Activated B cell treated with CpG ODN at 0.5 μM for 24 hours (primary cell): ENCODE measurements at regions of chr1 and their contacts with region 1.

Region 1: GRCh38 chr1:165630629-165631341 is at the start of gene MGST3:
- DNase-seq: peak; percentile 84
- ATAC-seq: peak; percentile 93
- H3K4me3 Mint-ChIP-seq: no peak within 1 kb of the TSS
- H3K27ac Mint-ChIP-seq: no peak within 1 kb of the TSS
- H3K4me1 Mint-ChIP-seq: peaks cover 33% of the 10 kb centered on the region
- H3K27me3 Mint-ChIP-seq: no peaks in the 10 kb centered on the region
- CTCF ChIP-seq: no peak
- total RNA-seq, gene MGST3: 31.3 and 33.4 TPM in 2 replicates

Region 2: DNA sequence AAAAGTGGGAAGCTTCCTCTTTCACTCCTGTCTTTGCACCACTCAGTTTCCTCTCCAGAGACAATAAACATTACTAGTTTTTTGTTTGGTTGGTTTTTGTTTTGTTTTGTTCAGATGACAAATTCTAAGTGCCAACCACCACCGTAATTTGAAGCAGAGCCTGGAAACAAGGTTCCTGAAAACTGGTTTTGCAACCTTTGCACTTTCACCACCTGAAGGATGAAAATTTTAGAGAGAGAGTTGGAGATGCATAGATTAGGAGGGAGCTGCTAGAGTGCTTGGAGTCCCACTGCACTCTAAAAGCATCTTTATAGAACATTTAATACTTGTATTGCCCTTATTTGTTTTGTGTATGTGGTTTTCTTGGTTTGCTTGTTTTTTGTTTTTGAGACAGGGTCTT is 19.9 kb before region 1 on chr1:
- CTCF ChIA-PET with region 1: no interaction called
- POLR2A ChIA-PET with region 1: no interaction called
- intact Hi-C with region 1: no loop called
- DNase-seq: no peak
- ATAC-seq: no peak
- H3K4me3 Mint-ChIP-seq: no peak overlapping the region
- H3K27ac Mint-ChIP-seq: no peak overlapping the region
- H3K4me1 Mint-ChIP-seq: peaks cover 7% of the 10 kb centered on the region
- H3K27me3 Mint-ChIP-seq: peaks cover 29% of the 10 kb centered on the region
- CTCF ChIP-seq: no peak

Region 3: DNA sequence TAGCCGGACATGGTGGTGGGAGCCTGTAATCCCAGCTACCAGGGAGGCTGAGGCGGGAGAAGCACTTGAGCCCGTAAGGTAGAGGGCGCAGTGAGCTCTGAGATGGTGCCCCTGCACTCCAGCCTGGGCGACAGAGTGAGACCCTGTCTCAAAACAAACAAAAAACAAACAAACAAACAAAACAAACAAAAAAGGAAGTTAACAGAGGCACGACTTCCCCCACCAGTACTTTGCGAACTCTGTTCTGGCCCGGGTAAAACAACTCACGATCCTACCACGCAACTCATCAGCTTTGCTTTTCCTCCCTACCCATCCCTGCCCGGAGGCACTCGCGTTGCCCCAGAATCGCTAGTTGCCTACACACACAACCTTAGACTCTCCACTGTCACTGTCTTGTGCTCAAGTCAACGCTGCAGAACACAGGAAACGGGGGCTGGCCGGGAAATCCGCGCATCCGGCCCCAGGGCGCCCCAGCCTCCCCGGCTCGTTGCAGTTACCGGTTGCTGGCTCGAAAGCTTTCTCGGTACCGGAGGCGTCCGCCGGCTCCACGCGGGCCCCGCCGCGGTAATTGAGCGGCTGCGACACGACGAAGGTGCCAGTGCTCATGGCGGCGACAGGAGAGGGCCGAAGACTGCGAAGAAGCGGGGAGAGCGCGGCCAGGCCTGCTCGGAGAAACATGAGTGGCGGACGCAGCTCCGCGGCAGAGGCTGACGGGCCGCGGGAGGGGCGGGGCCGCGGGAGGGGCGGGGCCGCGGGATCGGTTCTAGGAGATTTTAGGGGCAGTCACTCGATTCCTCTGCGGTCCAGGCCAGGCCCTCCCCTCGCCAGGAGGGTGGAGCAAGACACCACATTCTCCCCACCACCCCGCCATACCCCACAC is 67.3 kb after region 1 on chr1 and contains the start of gene ALDH9A1:
- CTCF ChIA-PET with region 1: no interaction called
- POLR2A ChIA-PET with region 1: interaction called, 3 read pairs
- intact Hi-C with region 1: loop called (anchors 1 kb)
- DNase-seq: peak; percentile 86
- ATAC-seq: peak; percentile 93
- H3K4me3 Mint-ChIP-seq: peak within 1 kb of the TSS; percentile 91
- H3K27ac Mint-ChIP-seq: peak within 1 kb of the TSS; percentile 91
- H3K4me1 Mint-ChIP-seq: peaks cover 27% of the 10 kb centered on the region
- H3K27me3 Mint-ChIP-seq: peaks cover 4% of the 10 kb centered on the region
- CTCF ChIP-seq: no peak
- total RNA-seq, gene ALDH9A1: 30.3 and 35.8 TPM in 2 replicates

Region 4: GRCh38 chr1:165759095-165759494 is 128.3 kb after region 1 on chr1:
- CTCF ChIA-PET with region 1: no interaction called
- POLR2A ChIA-PET with region 1: no interaction called
- intact Hi-C with region 1: no loop called
- DNase-seq: no peak
- ATAC-seq: no peak
- H3K4me3 Mint-ChIP-seq: no peak overlapping the region
- H3K27ac Mint-ChIP-seq: no peak overlapping the region
- H3K4me1 Mint-ChIP-seq: peaks cover 7% of the 10 kb centered on the region
- H3K27me3 Mint-ChIP-seq: no peaks in the 10 kb centered on the region
- CTCF ChIP-seq: no peak

Region 5: DNA sequence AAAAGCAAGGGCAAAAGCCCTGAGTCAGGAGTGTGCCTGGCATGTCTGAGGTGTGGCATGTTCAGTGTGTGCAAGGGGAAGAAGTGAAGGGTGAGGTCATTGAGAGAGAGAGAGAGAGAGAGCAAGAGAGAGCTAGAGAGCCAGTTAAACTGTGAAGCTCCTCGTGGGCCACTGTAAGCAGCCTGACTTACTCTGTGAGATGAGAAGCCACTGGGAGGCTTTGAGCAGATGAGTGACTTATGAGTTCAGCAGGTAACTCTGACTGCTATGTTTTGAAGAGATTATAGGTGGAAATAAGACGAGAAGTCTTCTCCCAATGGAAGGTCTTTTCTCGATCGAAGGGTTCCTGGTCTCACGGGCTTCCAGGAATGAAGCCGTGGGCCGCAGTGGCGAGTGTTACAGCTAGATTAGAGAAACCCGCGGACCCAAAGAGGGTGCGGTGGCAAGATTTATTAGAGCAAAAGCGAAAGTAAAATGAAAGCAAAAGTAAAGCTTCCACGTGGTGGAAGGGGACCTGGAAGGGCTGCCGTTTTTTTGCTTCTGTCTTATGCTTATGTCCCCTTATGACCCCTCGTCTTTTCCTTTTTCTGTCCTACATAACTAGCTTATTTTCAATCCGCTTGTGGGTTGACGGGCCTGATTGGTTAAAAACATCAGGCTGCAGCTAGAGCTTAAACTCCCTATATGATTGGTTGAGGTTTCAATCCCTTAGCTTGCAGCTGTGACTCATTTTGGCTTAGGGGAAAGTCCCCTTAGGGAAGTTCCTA is 859.1 kb after region 1 on chr1:
- CTCF ChIA-PET with region 1: no interaction called
- POLR2A ChIA-PET with region 1: no interaction called
- intact Hi-C with region 1: loop called (anchors 1 kb)
- DNase-seq: peak; percentile 34
- ATAC-seq: peak; percentile 77
- H3K4me3 Mint-ChIP-seq: no peak overlapping the region
- H3K27ac Mint-ChIP-seq: no peak overlapping the region
- H3K4me1 Mint-ChIP-seq: peaks cover 6% of the 10 kb centered on the region
- H3K27me3 Mint-ChIP-seq: peaks cover 3% of the 10 kb centered on the region
- CTCF ChIP-seq: no peak